ENCODE measurements at regions of chr12 and their contacts with region 1.

Region 1: DNA sequence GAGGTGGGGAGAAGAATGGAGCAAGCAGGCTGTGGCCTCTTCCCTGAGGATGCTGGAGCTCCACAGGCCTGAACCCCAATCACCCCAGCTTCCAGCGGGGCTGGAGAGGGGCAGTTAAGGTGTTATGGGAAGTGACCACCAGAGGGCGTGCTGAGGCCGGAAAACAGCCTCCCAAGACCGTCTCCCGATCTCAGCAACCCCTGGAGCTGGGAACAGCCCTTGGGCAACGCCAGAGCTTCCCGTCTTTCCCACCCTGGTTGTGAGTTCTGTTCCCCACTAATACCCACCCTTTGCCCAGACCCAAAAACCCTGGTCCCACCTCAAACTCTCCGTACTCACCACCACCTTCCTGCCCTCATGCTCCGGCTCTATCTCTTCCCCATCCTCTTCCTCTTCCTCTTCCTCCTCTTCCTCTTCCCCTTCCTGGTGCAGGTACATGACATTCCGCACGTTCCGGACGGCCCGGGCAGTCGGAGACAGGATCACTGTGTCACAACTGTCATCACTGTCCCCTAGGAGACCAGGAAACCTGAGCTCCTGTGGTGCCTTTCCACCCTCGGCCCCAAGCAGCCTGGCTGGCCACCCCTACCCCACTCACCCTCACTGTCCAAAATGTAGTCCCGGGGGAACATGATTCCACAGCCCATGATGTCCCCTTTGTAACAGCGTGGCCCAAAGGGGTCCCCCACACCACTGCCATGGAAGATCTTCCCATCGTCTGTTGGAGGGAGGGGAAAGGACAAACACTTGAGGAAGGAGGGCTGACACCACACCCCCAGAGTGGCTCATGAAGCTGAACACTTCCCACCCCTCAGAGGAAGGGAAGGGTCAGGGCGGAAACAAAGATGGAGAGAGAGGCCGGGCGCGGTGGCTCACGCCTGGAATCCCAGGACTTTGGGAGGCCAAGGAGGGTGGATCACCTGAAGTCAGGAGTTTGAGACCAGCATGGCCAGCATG is 12.9 kb downstream of the SPRYD3 start:
- DNase-seq: peak; percentile 48 to 64 (median 57)
- H3K4me3 ChIP-seq: no peak overlapping the region
- H3K4me3 Mint-ChIP-seq: no peak overlapping the region
- H3K27ac ChIP-seq: no peak overlapping the region
- H3K27ac Mint-ChIP-seq: peak overlapping the region in 6 of 7 donors; percentile 54 to 89 (median 68)
- H3K4me1 ChIP-seq: peaks cover 7% of the 10 kb centered on the region
- H3K4me1 Mint-ChIP-seq: peaks cover 9 to 19% (median 12%) of the 10 kb centered on the region in 4 donors
- H3K27me3 ChIP-seq: no peaks in the 10 kb centered on the region
- H3K27me3 Mint-ChIP-seq: no peaks in the 10 kb centered on the region

Region 2: DNA sequence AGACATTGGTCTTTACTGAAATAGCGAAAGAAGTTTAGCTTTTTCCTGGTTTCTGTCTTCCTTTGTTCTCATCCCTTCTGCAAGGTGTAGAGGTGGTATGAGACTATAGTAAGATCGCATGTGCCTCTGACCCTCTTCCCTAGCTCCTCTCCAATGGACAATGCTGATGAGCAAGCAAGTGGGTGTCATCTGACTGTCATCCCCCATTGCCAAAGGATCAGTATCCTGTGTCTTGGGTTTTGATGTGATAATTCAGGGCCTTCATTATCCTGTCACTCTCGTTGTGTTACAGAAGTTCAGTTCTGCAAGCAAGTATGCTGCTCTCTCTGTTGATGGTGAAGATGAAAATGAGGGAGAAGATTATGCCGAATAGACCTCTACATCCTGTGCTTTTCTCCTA is 26.4 kb before region 1 on chr12:
- CTCF ChIA-PET with region 1: interaction called, 12 read pairs
- POLR2A ChIA-PET with region 1: interaction called, 4 read pairs
- intact Hi-C with region 1: no loop called
- DNase-seq: no peak
- H3K4me3 ChIP-seq: no peak overlapping the region
- H3K4me3 Mint-ChIP-seq: no peak overlapping the region
- H3K27ac ChIP-seq: no peak overlapping the region
- H3K27ac Mint-ChIP-seq: peak overlapping the region in 2 of 7 donors; percentile 14 to 50
- H3K4me1 ChIP-seq: peaks cover 13% of the 10 kb centered on the region
- H3K4me1 Mint-ChIP-seq: peaks cover 9 to 21% (median 12%) of the 10 kb centered on the region in 4 donors
- H3K27me3 ChIP-seq: no peaks in the 10 kb centered on the region
- H3K27me3 Mint-ChIP-seq: no peaks in the 10 kb centered on the region

Region 3: GRCh38 chr12:53054112-53054833 is 12.0 kb before region 1 on chr12:
- CTCF ChIA-PET with region 1: interaction called, 58 read pairs
- POLR2A ChIA-PET with region 1: interaction called, 9 read pairs
- intact Hi-C with region 1: no loop called
- DNase-seq: peak; percentile 94 to 96 (median 94)
- H3K4me3 ChIP-seq: peak overlapping the region; percentile 76 to 87
- H3K4me3 Mint-ChIP-seq: peak overlapping the region; percentile 88 to 95 (median 92)
- H3K27ac ChIP-seq: peak overlapping the region; percentile 62
- H3K27ac Mint-ChIP-seq: peak overlapping the region; percentile 80 to 98 (median 93)
- H3K4me1 ChIP-seq: peaks cover 9% of the 10 kb centered on the region
- H3K4me1 Mint-ChIP-seq: peaks cover 4 to 18% (median 12%) of the 10 kb centered on the region in 4 donors
- H3K27me3 ChIP-seq: no peaks in the 10 kb centered on the region
- H3K27me3 Mint-ChIP-seq: no peaks in the 10 kb centered on the region

Region 4: GRCh38 chr12:53086361-53086760 is 20.1 kb after region 1 on chr12:
- CTCF ChIA-PET with region 1: interaction called, 511 read pairs
- POLR2A ChIA-PET with region 1: interaction called, 4 read pairs
- intact Hi-C with region 1: no loop called
- DNase-seq: no peak
- H3K4me3 ChIP-seq: no peak overlapping the region
- H3K4me3 Mint-ChIP-seq: no peak overlapping the region
- H3K27ac ChIP-seq: no peak overlapping the region
- H3K27ac Mint-ChIP-seq: no peak overlapping the region
- H3K4me1 ChIP-seq: no peaks in the 10 kb centered on the region
- H3K4me1 Mint-ChIP-seq: no peaks in the 10 kb centered on the region
- H3K27me3 ChIP-seq: no peaks in the 10 kb centered on the region
- H3K27me3 Mint-ChIP-seq: peaks cover 2 to 18% of the 10 kb centered on the region in 2 donors

Region 5: GRCh38 chr12:53190108-53190729 is 124.0 kb after region 1 on chr12:
- CTCF ChIA-PET with region 1: interaction called, 4 read pairs
- POLR2A ChIA-PET with region 1: no interaction called
- intact Hi-C with region 1: loop called (anchors 5 kb)
- DNase-seq: peak; percentile 46 to 64 (median 52)
- H3K4me3 ChIP-seq: no peak overlapping the region
- H3K4me3 Mint-ChIP-seq: no peak overlapping the region
- H3K27ac ChIP-seq: no peak overlapping the region
- H3K27ac Mint-ChIP-seq: peak overlapping the region in 6 of 7 donors; percentile 51 to 79 (median 66)
- H3K4me1 ChIP-seq: peaks cover 13% of the 10 kb centered on the region
- H3K4me1 Mint-ChIP-seq: peaks cover 8 to 22% (median 11%) of the 10 kb centered on the region in 4 donors
- H3K27me3 ChIP-seq: no peaks in the 10 kb centered on the region
- H3K27me3 Mint-ChIP-seq: no peaks in the 10 kb centered on the region

Region 6: GRCh38 chr12:53344824-53345485 is 278.7 kb after region 1 on chr12:
- CTCF ChIA-PET with region 1: interaction called, 11 read pairs
- POLR2A ChIA-PET with region 1: no interaction called
- intact Hi-C with region 1: loop called (anchors 2 kb)
- DNase-seq: peak; percentile 62 to 66 (median 65)
- H3K4me3 ChIP-seq: peak overlapping the region in 1 of 2 donors; percentile 73
- H3K4me3 Mint-ChIP-seq: peak overlapping the region; percentile 94 to 99 (median 98)
- H3K27ac ChIP-seq: peak overlapping the region; percentile 44
- H3K27ac Mint-ChIP-seq: peak overlapping the region; percentile 68 to 97 (median 94)
- H3K4me1 ChIP-seq: peaks cover 7% of the 10 kb centered on the region
- H3K4me1 Mint-ChIP-seq: peaks cover 11 to 18% (median 14%) of the 10 kb centered on the region in 4 donors
- H3K27me3 ChIP-seq: no peaks in the 10 kb centered on the region
- H3K27me3 Mint-ChIP-seq: no peaks in the 10 kb centered on the region